Mammary epithelial cell (primary cell): ENCODE measurements at regions of chr10 and their contacts with region 1.

Region 1: DNA sequence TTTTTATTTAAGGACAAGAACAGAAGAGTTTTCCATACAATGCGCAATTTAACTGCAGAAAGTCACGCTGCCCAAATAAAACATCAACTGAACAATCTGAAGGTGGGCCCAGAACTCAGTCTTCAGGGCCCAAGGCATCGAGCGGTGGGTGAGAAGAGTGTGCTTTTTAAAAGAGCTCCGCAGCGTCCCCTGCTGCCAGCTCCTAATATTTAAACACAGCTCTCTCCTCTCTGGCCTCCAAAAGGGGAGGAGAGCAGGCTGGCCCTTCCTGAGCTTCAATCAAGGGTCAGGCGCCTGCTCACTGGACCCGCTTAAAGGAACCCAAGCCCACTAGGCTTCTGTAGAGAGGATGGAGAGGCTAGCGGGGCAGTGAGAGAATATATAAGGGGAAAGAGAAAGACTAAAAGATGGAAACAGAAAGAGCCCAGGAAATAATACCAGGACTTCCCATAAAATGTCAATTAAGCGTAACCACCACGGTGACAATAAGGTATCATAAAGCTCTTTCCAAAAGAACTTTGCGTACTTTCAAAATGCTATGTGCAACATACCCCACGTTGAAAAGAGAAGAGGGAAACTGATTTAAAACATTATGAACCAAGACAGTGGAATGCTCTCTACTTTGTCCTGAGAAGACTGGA is 2.8 kb downstream of the FAM53B start:
- DNase-seq: peak; percentile 77
- H3K4me3 ChIP-seq: peak overlapping the region; percentile 42 to 46 (median 44)
- H3K27ac ChIP-seq: peak overlapping the region; percentile 91
- H3K4me1 ChIP-seq: peaks cover 69% of the 10 kb centered on the region
- H3K27me3 ChIP-seq: no peaks in the 10 kb centered on the region
- CTCF ChIP-seq: peak; percentile 74 to 85

Region 2: GRCh38 chr10:124418726-124419501 is 322.5 kb before region 1 on chr10 and contains the start of gene OAT:
- CTCF ChIA-PET with region 1: no interaction called
- dilution Hi-C with region 1: no loop called
- in situ Hi-C with region 1: no loop called
- intact Hi-C with region 1: loop called (anchors 5 kb)
- DNase-seq: peak; percentile 95
- H3K4me3 ChIP-seq: peak within 1 kb of the TSS; percentile 64 to 79 (median 75)
- H3K27ac ChIP-seq: peak within 1 kb of the TSS; percentile 70
- H3K4me1 ChIP-seq: peaks cover 29% of the 10 kb centered on the region
- H3K27me3 ChIP-seq: no peaks in the 10 kb centered on the region
- CTCF ChIP-seq: peak; percentile 7 to 30
- total RNA-seq, gene OAT: 204 to 225 TPM

Region 3: DNA sequence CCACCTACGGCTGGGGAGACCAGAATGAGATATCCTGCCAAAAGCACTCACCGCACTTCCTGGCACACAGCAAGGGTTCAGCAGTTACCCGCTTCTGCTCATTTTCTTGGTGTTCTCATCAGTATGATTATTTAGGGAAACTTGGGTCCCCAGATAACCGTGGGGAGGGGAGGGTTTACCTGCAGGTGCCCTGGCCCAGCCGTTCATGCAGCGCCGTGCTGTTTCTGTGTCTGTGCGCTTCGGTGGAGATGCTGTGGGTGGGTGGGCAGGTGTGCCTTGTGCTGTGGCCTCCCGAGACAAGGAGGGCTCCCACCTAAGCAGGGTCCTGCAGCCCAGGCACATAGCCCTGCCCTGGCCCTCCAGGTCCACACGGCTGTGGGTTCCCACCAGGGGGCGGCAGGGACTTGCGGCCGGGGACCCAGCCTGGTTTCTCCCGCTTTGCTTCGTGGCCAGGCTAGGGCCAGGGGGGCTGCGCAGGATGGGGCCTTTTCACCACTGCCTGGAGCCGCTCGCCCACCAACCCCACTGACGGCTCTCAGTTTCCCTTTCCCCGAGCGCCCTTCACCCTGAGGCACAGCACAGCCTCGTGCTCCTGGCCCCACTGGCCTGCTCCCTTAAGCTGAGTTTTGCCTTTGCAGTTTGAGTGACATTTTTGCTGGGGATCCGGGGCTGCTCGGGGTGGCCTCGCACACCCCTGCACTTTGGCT is 201.3 kb before region 1 on chr10:
- CTCF ChIA-PET with region 1: no interaction called
- dilution Hi-C with region 1: no loop called
- in situ Hi-C with region 1: loop called (anchors 10 kb)
- intact Hi-C with region 1: loop called (anchors 1 kb)
- DNase-seq: no peak
- H3K4me3 ChIP-seq: no peak overlapping the region
- H3K27ac ChIP-seq: no peak overlapping the region
- H3K4me1 ChIP-seq: peaks cover 7% of the 10 kb centered on the region
- H3K27me3 ChIP-seq: no peaks in the 10 kb centered on the region
- CTCF ChIP-seq: peak; percentile 25 to 56

Region 4: DNA sequence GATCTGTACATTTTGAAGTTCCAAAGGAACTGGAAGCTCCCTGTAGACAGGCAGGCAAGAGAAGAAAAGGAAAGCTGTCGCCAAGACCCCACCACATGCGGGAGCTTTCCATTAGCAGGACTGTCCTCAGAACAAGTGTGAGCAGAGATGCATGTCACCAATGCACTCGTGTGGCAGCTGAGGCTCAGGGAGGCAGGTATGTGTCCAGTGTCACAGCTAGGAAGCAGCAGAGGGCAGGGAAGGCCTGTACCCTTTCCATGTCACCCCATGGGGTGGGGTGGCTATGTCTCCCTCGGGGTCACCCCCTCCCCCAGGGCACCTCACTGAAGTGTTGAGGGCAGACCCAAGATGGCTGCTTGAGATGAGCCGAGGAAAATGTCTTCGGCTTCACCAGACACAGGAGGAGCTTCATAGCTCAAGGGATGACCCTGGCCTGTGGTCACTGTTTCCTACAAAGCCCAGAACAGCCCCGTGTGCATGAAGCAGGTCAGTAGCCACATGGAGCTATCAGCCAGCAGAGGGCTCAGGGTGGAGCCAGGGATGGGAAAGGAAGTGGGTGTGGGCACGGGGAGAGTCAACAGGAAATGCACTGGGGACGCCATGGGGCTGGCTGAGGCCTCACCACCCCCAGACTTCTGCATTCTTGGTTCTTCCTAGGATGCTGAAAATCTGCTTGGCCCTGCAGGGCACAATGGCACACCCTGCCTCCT is 93.8 kb before region 1 on chr10:
- CTCF ChIA-PET with region 1: interaction called, 5 read pairs
- dilution Hi-C with region 1: no loop called
- in situ Hi-C with region 1: loop called in 1 of 2 experiments (anchors 25 kb)
- intact Hi-C with region 1: loop called (anchors 5 kb)
- DNase-seq: peak; percentile 51
- H3K4me3 ChIP-seq: no peak overlapping the region
- H3K27ac ChIP-seq: peak overlapping the region; percentile 69
- H3K4me1 ChIP-seq: peaks cover 39% of the 10 kb centered on the region
- H3K27me3 ChIP-seq: no peaks in the 10 kb centered on the region
- CTCF ChIP-seq: peak; percentile 31 to 51

Region 5: GRCh38 chr10:124697830-124698544 is 43.4 kb before region 1 on chr10:
- CTCF ChIA-PET with region 1: no interaction called
- dilution Hi-C with region 1: no loop called
- in situ Hi-C with region 1: no loop called
- intact Hi-C with region 1: no loop called
- DNase-seq: no peak
- H3K4me3 ChIP-seq: no peak overlapping the region
- H3K27ac ChIP-seq: no peak overlapping the region
- H3K4me1 ChIP-seq: no peaks in the 10 kb centered on the region
- H3K27me3 ChIP-seq: no peaks in the 10 kb centered on the region
- CTCF ChIP-seq: no peak

Region 6: GRCh38 chr10:124708922-124709520 is 32.4 kb before region 1 on chr10:
- CTCF ChIA-PET with region 1: interaction called, 5 read pairs
- dilution Hi-C with region 1: loop called (anchors 5 kb)
- in situ Hi-C with region 1: no loop called
- intact Hi-C with region 1: loop called (anchors 2 kb)
- DNase-seq: no peak
- H3K4me3 ChIP-seq: no peak overlapping the region
- H3K27ac ChIP-seq: no peak overlapping the region
- H3K4me1 ChIP-seq: peaks cover 21% of the 10 kb centered on the region
- H3K27me3 ChIP-seq: no peaks in the 10 kb centered on the region
- CTCF ChIP-seq: no peak

Region 7: GRCh38 chr10:124827474-124827873 is 86.1 kb after region 1 on chr10:
- CTCF ChIA-PET with region 1: no interaction called
- dilution Hi-C with region 1: no loop called
- in situ Hi-C with region 1: no loop called
- intact Hi-C with region 1: loop called (anchors 2 kb)
- DNase-seq: no peak
- H3K4me3 ChIP-seq: no peak overlapping the region
- H3K27ac ChIP-seq: no peak overlapping the region
- H3K4me1 ChIP-seq: peaks cover 5% of the 10 kb centered on the region
- H3K27me3 ChIP-seq: no peaks in the 10 kb centered on the region
- CTCF ChIP-seq: peak; percentile 54 to 61

Region 8: DNA sequence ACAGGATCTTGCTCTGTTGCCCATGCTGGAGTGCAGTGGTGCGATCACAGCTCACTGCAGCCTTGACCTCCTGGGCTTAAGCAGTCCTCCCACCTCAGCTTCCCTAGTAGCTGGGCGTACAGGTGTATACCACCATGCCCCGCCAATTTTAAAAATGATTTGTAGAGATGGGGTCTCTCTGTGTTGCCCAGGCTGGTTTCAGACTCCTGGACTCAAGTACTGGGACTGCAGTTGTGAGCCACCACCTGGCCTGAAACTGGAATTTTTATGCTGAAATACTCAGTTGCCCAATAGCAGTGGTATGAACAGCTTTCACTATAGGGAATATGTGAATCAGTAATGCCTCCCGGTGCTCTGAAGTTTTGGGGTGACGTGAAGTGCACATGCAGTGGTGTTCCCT is 208.1 kb after region 1 on chr10:
- CTCF ChIA-PET with region 1: no interaction called
- dilution Hi-C with region 1: no loop called
- in situ Hi-C with region 1: no loop called
- intact Hi-C with region 1: no loop called
- DNase-seq: peak; percentile 4
- H3K4me3 ChIP-seq: no peak overlapping the region
- H3K27ac ChIP-seq: no peak overlapping the region
- H3K4me1 ChIP-seq: peaks cover 2% of the 10 kb centered on the region
- H3K27me3 ChIP-seq: no peaks in the 10 kb centered on the region
- CTCF ChIP-seq: no peak